Right cardiac atrium (tissue), 5 donors: ENCODE measurements at regions of chr4 and their contacts with region 1.

Region 1: GRCh38 chr4:101730291-101731117 is 60.0 kb upstream of the BANK1 start:
- DNase-seq: peak; percentile 68 to 77 (median 72)
- ATAC-seq: peak; percentile 91 to 92
- H3K4me3 ChIP-seq: no peak overlapping the region
- H3K27ac ChIP-seq: no peak overlapping the region
- H3K4me1 ChIP-seq: no peaks in the 10 kb centered on the region
- H3K27me3 ChIP-seq: no peaks in the 10 kb centered on the region

Region 2: GRCh38 chr4:101153653-101154052 is 576.9 kb before region 1 on chr4:
- intact Hi-C with region 1: loop called in 1 of 4 experiments (anchors 5 kb)
- DNase-seq: no peak
- ATAC-seq: no peak
- H3K4me3 ChIP-seq: no peak overlapping the region
- H3K27ac ChIP-seq: no peak overlapping the region
- H3K4me1 ChIP-seq: peaks cover 2% of the 10 kb centered on the region
- H3K27me3 ChIP-seq: no peaks in the 10 kb centered on the region

Region 3: DNA sequence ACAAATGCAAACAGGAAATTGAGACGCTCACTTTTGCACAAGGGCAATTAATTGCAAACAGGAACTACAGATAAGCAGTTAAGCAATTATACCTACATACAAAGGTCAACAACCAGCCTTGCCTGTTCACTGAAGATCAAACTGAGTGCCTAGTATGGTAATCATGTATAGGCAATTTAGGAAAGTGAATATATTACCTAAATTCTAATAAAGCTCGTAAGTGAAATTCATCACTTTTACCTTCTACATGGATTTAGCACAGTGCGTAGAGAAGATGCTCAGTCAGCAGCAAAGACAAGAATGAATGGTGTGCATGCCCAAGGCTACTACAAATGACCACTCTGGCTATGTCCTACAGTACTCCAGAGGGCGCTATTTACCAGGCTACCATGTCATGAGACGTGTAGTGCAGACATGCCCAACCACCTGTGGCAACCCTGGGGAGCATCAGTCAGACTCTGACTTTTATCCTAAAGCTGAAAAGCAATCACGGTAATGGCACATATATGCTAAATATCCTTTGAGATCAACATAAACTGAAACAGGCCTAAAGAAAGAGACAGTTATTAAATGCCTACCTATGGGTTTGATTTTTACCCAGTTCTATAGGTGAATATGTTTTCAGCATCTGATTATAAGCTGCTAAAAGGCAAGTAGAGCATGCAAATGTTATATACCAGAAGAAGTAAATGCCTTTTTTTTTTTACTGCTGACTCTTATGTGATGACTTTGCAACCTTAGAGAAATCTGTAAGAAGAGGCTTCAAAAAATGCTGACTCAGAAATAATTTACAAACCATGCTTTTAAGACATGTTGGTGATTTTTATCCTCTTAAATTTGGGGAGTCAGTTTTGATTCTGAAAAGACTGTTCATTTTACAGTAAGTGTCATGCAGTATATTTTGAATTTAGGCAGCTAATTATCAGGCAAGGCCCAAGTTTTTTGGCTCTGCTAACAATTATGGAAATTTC is 561.2 kb before region 1 on chr4:
- intact Hi-C with region 1: loop called (anchors 5 kb)
- DNase-seq: peak in 2 of 3 donors; percentile 28 to 60
- ATAC-seq: peak; percentile 94
- H3K4me3 ChIP-seq: no peak overlapping the region
- H3K27ac ChIP-seq: no peak overlapping the region
- H3K4me1 ChIP-seq: no peaks in the 10 kb centered on the region
- H3K27me3 ChIP-seq: no peaks in the 10 kb centered on the region